Panc1 (cell line): ENCODE measurements at regions of chr2 and their contacts with region 1.

Region 1: GRCh38 chr2:235106874-235107639 is 155.2 kb downstream of the SH3BP4 start:
- DNase-seq: peak; percentile 27
- ATAC-seq: peak; percentile 95
- H3K4me3 ChIP-seq: no peak overlapping the region
- H3K27ac ChIP-seq: peak overlapping the region; percentile 59
- H3K4me1 ChIP-seq: peaks cover 10% of the 10 kb centered on the region
- H3K27me3 ChIP-seq: no peaks in the 10 kb centered on the region
- CTCF ChIP-seq: peak; percentile 86

Region 2: DNA sequence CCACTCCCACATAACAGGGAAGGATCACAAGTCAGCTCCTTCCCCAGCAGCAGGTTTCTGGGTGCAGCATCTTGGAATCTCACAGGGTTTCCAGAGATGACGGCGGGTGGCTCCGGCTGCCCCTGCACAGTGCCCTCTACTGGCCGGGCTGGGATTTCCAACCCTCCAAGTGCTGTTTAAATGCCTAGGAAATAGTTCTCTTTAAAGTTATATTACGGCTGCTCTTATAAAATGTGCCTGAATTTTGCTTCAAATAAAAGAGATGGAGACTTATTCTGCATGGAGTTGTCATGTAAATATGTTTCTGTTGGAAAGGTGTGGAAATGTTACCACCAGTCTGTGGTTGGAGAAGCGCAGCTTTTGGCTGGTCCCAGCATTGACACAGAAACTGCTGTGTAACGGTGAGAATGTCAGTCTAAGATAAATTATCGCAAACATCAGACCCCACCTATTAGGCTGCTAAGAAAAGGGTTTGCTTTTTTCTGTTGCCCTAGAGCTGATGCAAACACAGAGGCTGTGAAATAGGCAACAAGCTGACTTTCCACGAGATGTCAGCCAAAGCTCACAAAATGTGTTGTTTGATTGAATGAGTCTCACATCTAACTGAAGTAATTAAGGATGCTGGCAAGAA is 1249.4 kb before region 1 on chr2:
- CTCF ChIA-PET with region 1: no interaction called
- POLR2A ChIA-PET with region 1: no interaction called
- in situ Hi-C with region 1: no loop called
- intact Hi-C with region 1: loop called (anchors 5 kb)
- DNase-seq: no peak
- ATAC-seq: 0 out of 2 replicates have a peak, but pooled peaks have one; percentile 19
- H3K4me3 ChIP-seq: no peak overlapping the region
- H3K27ac ChIP-seq: peak overlapping the region; percentile 83
- H3K4me1 ChIP-seq: peaks cover 20% of the 10 kb centered on the region
- H3K27me3 ChIP-seq: no peaks in the 10 kb centered on the region
- CTCF ChIP-seq: peak; percentile 93

Region 3: GRCh38 chr2:234544659-234545611 is 562.1 kb before region 1 on chr2:
- CTCF ChIA-PET with region 1: no interaction called
- POLR2A ChIA-PET with region 1: no interaction called
- in situ Hi-C with region 1: loop called (anchors 25 kb)
- intact Hi-C with region 1: no loop called
- DNase-seq: peak; percentile 15
- ATAC-seq: peak; percentile 86
- H3K4me3 ChIP-seq: no peak overlapping the region
- H3K27ac ChIP-seq: peak overlapping the region; percentile 42; the same call in 1 of the 2 replicates
- H3K4me1 ChIP-seq: peaks cover 6% of the 10 kb centered on the region
- H3K27me3 ChIP-seq: no peaks in the 10 kb centered on the region
- CTCF ChIP-seq: peak; percentile 85

Region 4: GRCh38 chr2:234951664-234952269 is 155.3 kb before region 1 on chr2 and contains the start of gene SH3BP4:
- CTCF ChIA-PET with region 1: no interaction called
- POLR2A ChIA-PET with region 1: interaction called, 15 read pairs
- in situ Hi-C with region 1: no loop called
- intact Hi-C with region 1: no loop called
- DNase-seq: no peak
- ATAC-seq: peak; percentile 84
- H3K4me3 ChIP-seq: peak within 1 kb of the TSS; percentile 64 to 92
- H3K27ac ChIP-seq: peak within 1 kb of the TSS; percentile 99
- H3K4me1 ChIP-seq: peaks cover 39% of the 10 kb centered on the region
- H3K27me3 ChIP-seq: no peaks in the 10 kb centered on the region
- CTCF ChIP-seq: no peak; the same call in 1 of the 2 replicates
- total RNA-seq, gene SH3BP4: 133 TPM